IMR-90 (cell line): ENCODE measurements at regions of chr15 and their contacts with region 1.

Region 1: DNA sequence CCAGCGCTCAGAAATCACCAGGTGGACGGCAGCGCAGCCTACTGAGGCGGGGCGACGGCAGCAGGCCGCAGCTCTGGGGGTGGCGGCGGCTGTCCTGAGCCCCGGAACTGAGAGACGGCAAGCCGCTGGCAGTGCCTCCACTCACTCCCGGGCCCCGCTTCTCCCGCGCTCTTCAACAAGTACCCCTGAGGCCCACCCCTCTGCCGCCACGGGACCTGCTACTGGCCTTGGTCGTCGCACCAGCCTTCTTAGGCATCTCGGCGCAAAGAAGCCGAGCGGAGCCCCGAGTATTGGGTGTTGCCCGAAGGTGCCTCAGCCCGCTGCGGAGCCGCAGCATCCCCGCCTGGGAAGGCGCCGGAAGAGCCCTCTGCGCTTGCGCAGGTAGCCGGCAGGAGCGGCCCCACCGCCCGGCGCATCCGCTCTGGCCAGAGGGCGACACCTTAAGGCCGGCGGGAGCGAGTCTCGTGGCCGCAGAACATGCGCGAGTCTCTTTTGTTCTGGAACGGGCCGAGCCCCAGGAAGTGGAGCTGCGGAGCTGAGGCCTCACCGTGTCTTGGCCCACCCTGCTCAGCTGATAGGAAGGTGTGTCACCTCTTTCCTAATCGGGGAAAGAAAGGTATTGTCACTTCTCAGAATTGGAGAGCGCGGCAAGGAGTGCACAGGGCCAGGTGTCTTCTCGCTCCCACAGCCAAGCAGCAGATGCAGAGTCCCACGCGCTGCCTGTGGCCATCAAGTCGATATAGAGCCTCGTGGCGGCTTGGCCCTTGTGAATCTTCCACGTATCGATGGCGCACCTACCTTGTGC is at the start of gene C15orf40:
- DNase-seq: peak; percentile 90
- ATAC-seq: peak; percentile 92
- H3K4me3 ChIP-seq: peak within 1 kb of the TSS; percentile 90
- H3K27ac ChIP-seq: peak within 1 kb of the TSS; percentile 75
- H3K4me1 ChIP-seq: peaks cover 10% of the 10 kb centered on the region
- H3K27me3 ChIP-seq: no peaks in the 10 kb centered on the region
- CTCF ChIP-seq: peak; percentile 74
- POLR2A ChIP-seq: peak; percentile 56; the same call in 1 of the 2 replicates
- RAD21 ChIP-seq: peak; percentile 48
- total RNA-seq, gene C15orf40: 4.4 and 7.0 TPM in 2 replicates

Region 2: GRCh38 chr15:82624008-82624837 is 387.2 kb before region 1 on chr15:
- CTCF ChIA-PET with region 1: no interaction called
- POLR2A ChIA-PET with region 1: no interaction called
- dilution Hi-C with region 1: no loop called
- in situ Hi-C with region 1: no loop called
- intact Hi-C with region 1: no loop called
- DNase-seq: no peak
- ATAC-seq: 0 out of 2 replicates have a peak, but pooled peaks have one; percentile 27
- H3K4me3 ChIP-seq: no peak overlapping the region
- H3K27ac ChIP-seq: no peak overlapping the region
- H3K4me1 ChIP-seq: no peaks in the 10 kb centered on the region
- H3K27me3 ChIP-seq: no peaks in the 10 kb centered on the region
- CTCF ChIP-seq: no peak
- POLR2A ChIP-seq: no peak
- RAD21 ChIP-seq: no peak

Region 3: GRCh38 chr15:82768428-82769081 is 242.9 kb before region 1 on chr15:
- CTCF ChIA-PET with region 1: no interaction called
- POLR2A ChIA-PET with region 1: no interaction called
- dilution Hi-C with region 1: no loop called
- in situ Hi-C with region 1: no loop called
- intact Hi-C with region 1: no loop called
- DNase-seq: peak; percentile 19
- ATAC-seq: peak; percentile 48
- H3K4me3 ChIP-seq: no peak overlapping the region
- H3K27ac ChIP-seq: no peak overlapping the region
- H3K4me1 ChIP-seq: no peaks in the 10 kb centered on the region
- H3K27me3 ChIP-seq: no peaks in the 10 kb centered on the region
- CTCF ChIP-seq: no peak
- POLR2A ChIP-seq: no peak
- RAD21 ChIP-seq: no peak

Region 4: DNA sequence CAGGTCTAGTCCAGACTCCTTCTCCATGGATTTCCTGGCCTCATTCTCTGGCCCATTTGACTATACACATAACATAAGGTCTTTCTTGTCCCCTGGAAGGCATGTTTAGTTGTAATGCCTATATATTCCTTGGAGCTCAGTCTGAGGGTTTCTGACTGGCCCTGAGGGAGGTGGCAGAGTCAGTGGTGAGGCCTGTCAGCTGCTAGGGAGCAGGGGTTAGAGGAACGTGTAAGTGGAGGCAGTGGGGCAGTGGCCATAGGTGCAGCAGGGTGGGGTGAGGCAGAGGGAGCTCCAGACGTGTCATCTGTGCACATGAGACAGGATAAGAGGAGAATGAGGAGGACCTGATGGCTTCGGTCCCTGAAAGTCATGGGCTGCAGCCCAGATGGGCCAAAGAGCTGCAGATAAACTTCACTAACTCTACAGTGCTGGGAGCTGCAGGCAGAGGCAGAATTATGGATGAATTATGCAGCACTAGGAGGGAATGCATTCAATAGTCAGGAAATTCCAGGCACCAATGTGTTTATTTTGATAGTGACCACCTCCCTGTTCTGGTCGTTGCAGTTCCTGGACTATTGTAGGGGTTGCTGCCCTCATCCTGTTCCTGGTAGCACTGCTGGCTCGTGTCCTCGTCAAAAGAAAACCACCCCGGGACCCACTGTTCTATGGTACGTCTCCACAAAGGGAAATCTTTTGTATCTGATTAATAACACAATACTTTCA is 100.9 kb after region 1 on chr15:
- CTCF ChIA-PET with region 1: interaction called, 3 read pairs
- POLR2A ChIA-PET with region 1: no interaction called
- dilution Hi-C with region 1: no loop called
- in situ Hi-C with region 1: no loop called
- intact Hi-C with region 1: loop called (anchors 1 kb)
- DNase-seq: peak; percentile 95
- ATAC-seq: peak; percentile 92
- H3K4me3 ChIP-seq: no peak overlapping the region
- H3K27ac ChIP-seq: peak overlapping the region; percentile 77
- H3K4me1 ChIP-seq: peaks cover 18% of the 10 kb centered on the region
- H3K27me3 ChIP-seq: no peaks in the 10 kb centered on the region
- CTCF ChIP-seq: peak; percentile 46
- POLR2A ChIP-seq: no peak
- RAD21 ChIP-seq: peak; percentile 47

Region 5: GRCh38 chr15:83207622-83208411 is 196.3 kb after region 1 on chr15 and contains the start of gene HDGFL3:
- CTCF ChIA-PET with region 1: interaction called, 3 read pairs
- POLR2A ChIA-PET with region 1: no interaction called
- dilution Hi-C with region 1: no loop called
- in situ Hi-C with region 1: no loop called
- intact Hi-C with region 1: loop called (anchors 1 kb)
- DNase-seq: peak; percentile 39
- ATAC-seq: peak; percentile 63
- H3K4me3 ChIP-seq: peak within 1 kb of the TSS; percentile 97
- H3K27ac ChIP-seq: peak within 1 kb of the TSS; percentile 84
- H3K4me1 ChIP-seq: peaks cover 8% of the 10 kb centered on the region
- H3K27me3 ChIP-seq: no peaks in the 10 kb centered on the region
- CTCF ChIP-seq: no peak
- POLR2A ChIP-seq: peak; percentile 85
- RAD21 ChIP-seq: peak; percentile 11; the same call in 1 of the 2 replicates
- total RNA-seq, gene HDGFL3: 9.5 and 31.4 TPM in 2 replicates

Region 6: GRCh38 chr15:83283138-83283812 is 271.8 kb after region 1 on chr15:
- CTCF ChIA-PET with region 1: interaction called, 3 read pairs
- POLR2A ChIA-PET with region 1: no interaction called
- dilution Hi-C with region 1: no loop called
- in situ Hi-C with region 1: no loop called
- intact Hi-C with region 1: loop called (anchors 10 kb)
- DNase-seq: no peak
- ATAC-seq: no peak; the same call in 1 of the 2 replicates
- H3K4me3 ChIP-seq: peak overlapping the region; percentile 24; the same call in 1 of the 2 replicates
- H3K27ac ChIP-seq: no peak overlapping the region
- H3K4me1 ChIP-seq: peaks cover 8% of the 10 kb centered on the region
- H3K27me3 ChIP-seq: peaks cover 44% of the 10 kb centered on the region
- CTCF ChIP-seq: no peak
- POLR2A ChIP-seq: no peak
- RAD21 ChIP-seq: no peak

Region 7: DNA sequence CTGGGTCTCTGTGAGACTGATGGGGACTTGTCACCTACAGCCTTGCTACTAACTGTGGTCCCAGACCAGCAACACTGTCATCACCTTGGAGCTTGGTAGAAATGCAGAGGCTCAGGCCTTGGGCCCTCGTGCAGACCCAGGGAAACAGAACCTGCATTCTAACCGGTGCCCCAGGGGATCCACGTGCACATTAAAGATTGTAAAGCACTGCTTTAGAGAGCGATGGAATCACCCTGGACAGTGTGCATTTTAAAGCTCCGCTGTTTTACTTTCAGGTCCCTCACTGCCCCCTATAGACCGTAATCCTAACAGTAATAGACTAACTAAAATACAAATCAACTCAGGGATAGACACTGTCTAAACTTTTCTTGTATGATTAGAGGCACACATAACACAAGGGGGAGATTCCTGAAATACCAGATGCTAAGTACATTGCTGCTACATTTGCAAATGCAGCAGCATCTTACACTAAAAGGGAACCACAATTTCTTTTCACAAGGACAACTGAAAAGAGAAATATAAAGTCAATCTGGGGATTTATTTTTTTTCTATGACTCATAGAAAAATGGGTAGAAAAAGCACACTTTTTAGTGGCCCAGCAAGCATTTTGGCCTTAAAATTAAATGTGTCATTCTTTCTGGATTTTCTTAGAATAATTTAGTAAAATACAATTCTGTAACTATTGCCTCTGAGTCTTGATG is 425.1 kb after region 1 on chr15:
- CTCF ChIA-PET with region 1: no interaction called
- POLR2A ChIA-PET with region 1: no interaction called
- dilution Hi-C with region 1: no loop called
- in situ Hi-C with region 1: no loop called
- intact Hi-C with region 1: loop called (anchors 2 kb)
- DNase-seq: peak; percentile 52
- ATAC-seq: peak; percentile 83
- H3K4me3 ChIP-seq: no peak overlapping the region
- H3K27ac ChIP-seq: no peak overlapping the region
- H3K4me1 ChIP-seq: no peaks in the 10 kb centered on the region
- H3K27me3 ChIP-seq: no peaks in the 10 kb centered on the region; the same call in 1 of the 2 replicates
- CTCF ChIP-seq: peak; percentile 58
- POLR2A ChIP-seq: no peak
- RAD21 ChIP-seq: peak; percentile 63

Region 8: DNA sequence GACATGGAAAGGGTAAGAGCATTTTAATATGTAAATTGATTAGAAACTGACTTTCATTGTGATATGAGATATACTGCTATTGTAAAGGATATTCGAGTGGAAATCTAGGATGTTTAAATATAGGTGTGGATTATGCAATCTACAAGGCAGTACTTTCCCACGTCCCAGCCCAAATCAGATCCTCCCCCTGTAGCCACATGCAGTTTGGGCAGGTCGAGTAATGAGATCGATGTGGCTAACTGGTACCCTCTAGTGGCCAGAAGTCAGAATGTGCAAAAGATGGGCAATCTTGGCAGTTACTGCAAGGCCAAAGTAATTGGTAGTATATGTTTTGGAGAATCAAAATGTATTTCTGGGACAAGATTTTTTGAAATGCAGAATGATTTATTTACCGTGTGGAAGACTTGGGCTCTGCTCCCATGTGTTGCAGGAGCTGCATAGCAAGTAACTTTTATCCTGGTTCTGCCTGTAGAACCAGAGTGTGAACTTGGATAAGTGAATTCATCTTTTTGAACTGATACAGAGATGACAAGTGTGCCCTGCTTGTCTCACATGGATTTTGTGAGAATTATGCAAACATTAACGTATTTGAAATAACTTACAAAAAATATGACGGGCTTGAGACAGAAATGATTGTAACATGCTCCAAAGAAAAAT is 548.0 kb after region 1 on chr15:
- CTCF ChIA-PET with region 1: no interaction called
- POLR2A ChIA-PET with region 1: no interaction called
- dilution Hi-C with region 1: no loop called
- in situ Hi-C with region 1: no loop called
- intact Hi-C with region 1: loop called (anchors 5 kb)
- DNase-seq: peak; percentile 61
- ATAC-seq: peak; percentile 92
- H3K4me3 ChIP-seq: no peak overlapping the region
- H3K27ac ChIP-seq: no peak overlapping the region
- H3K4me1 ChIP-seq: no peaks in the 10 kb centered on the region
- H3K27me3 ChIP-seq: no peaks in the 10 kb centered on the region; the same call in 1 of the 2 replicates
- CTCF ChIP-seq: peak; percentile 71
- POLR2A ChIP-seq: no peak
- RAD21 ChIP-seq: peak; percentile 81